ENCODE measurements at regions of chrX and their contacts with region 1.

Region 1: GRCh38 chrX:23694606-23695005 is 27.3 kb downstream of the PRDX4 start:
- DNase-seq: peak; percentile 52
- H3K4me3 ChIP-seq: no peak overlapping the region
- H3K27ac ChIP-seq: no peak overlapping the region
- H3K4me1 ChIP-seq: no peaks in the 10 kb centered on the region
- H3K27me3 ChIP-seq: no peaks in the 10 kb centered on the region
- CTCF ChIP-seq: peak; percentile 33

Region 2: GRCh38 chrX:24063488-24063887 is 368.9 kb after region 1 on chrX:
- intact Hi-C with region 1: loop called (anchors 10 kb)
- DNase-seq: no peak
- H3K4me3 ChIP-seq: no peak overlapping the region
- H3K27ac ChIP-seq: no peak overlapping the region
- H3K4me1 ChIP-seq: no peaks in the 10 kb centered on the region
- H3K27me3 ChIP-seq: no peaks in the 10 kb centered on the region
- CTCF ChIP-seq: no peak